A673 (cell line): ENCODE measurements at regions of chr7 and their contacts with region 1.

Region 1: GRCh38 chr7:45917658-45918057 is 3.4 kb downstream of the IGFBP3 start:
- DNase-seq: peak; percentile 78
- H3K4me3 ChIP-seq: no peak overlapping the region
- H3K27ac ChIP-seq: no peak overlapping the region
- H3K4me1 ChIP-seq: peaks cover 3% of the 10 kb centered on the region
- H3K27me3 ChIP-seq: peaks cover 71% of the 10 kb centered on the region
- CTCF ChIP-seq: peak; percentile 93

Region 2: GRCh38 chr7:45057871-45058270 is 859.8 kb before region 1 on chr7:
- CTCF ChIA-PET with region 1: no interaction called
- POLR2A ChIA-PET with region 1: no interaction called
- intact Hi-C with region 1: no loop called
- DNase-seq: no peak
- H3K4me3 ChIP-seq: no peak overlapping the region
- H3K27ac ChIP-seq: no peak overlapping the region
- H3K4me1 ChIP-seq: no peaks in the 10 kb centered on the region
- H3K27me3 ChIP-seq: no peaks in the 10 kb centered on the region
- CTCF ChIP-seq: no peak

Region 3: DNA sequence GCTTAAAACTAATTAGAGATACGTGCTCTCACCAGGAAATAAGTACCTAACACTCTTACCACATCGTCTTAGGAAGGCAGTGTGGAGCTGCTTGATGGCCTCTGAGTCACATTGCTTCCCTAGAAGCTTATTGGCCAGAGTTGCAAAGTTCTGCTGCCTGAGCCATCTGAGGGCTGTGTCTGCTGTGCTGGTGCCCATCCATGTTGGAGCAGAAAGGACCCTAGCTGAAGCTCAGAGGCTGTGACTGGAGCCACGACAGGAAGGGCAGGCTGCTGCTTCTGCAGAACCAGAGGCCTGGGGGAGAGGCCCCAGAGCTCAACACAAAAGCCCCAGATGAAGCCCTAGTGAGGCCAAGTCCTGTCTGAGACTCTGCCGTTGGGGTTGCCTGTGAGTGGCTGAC is 68.2 kb after region 1 on chr7:
- CTCF ChIA-PET with region 1: no interaction called
- POLR2A ChIA-PET with region 1: no interaction called
- intact Hi-C with region 1: no loop called
- DNase-seq: no peak
- H3K4me3 ChIP-seq: no peak overlapping the region
- H3K27ac ChIP-seq: no peak overlapping the region
- H3K4me1 ChIP-seq: no peaks in the 10 kb centered on the region
- H3K27me3 ChIP-seq: no peaks in the 10 kb centered on the region
- CTCF ChIP-seq: no peak

Region 4: GRCh38 chr7:46035166-46035565 is 117.5 kb after region 1 on chr7:
- CTCF ChIA-PET with region 1: no interaction called
- POLR2A ChIA-PET with region 1: no interaction called
- intact Hi-C with region 1: no loop called
- DNase-seq: no peak
- H3K4me3 ChIP-seq: no peak overlapping the region
- H3K27ac ChIP-seq: no peak overlapping the region
- H3K4me1 ChIP-seq: no peaks in the 10 kb centered on the region
- H3K27me3 ChIP-seq: peaks cover 18% of the 10 kb centered on the region
- CTCF ChIP-seq: no peak

Region 5: GRCh38 chr7:47179812-47180515 is 1262.3 kb after region 1 on chr7:
- CTCF ChIA-PET with region 1: no interaction called
- POLR2A ChIA-PET with region 1: no interaction called
- intact Hi-C with region 1: loop called (anchors 1 kb)
- DNase-seq: peak; percentile 55
- H3K4me3 ChIP-seq: no peak overlapping the region
- H3K27ac ChIP-seq: no peak overlapping the region
- H3K4me1 ChIP-seq: no peaks in the 10 kb centered on the region
- H3K27me3 ChIP-seq: peaks cover 10% of the 10 kb centered on the region
- CTCF ChIP-seq: peak; percentile 73

Region 6: DNA sequence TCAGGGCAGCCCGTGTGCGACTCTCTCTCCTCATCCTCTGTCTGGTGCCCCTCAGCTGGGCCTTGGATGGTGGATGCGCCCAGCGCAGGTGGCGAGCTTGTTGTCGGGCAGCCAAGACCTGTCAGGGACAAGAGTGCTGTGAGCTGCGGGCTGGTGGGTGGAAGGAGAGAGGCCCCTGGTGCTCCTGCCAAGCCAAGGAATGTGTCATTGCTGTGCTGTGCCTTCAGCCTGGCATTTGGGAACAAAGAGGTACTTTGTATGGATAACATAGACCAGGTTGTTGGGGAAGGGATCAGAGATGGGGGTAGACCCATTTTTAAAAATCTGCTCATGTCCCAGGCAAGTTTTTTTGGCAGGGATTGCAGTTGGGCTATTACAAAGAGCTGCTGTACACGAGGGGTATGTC is 1909.7 kb after region 1 on chr7:
- CTCF ChIA-PET with region 1: no interaction called
- POLR2A ChIA-PET with region 1: no interaction called
- intact Hi-C with region 1: loop called (anchors 10 kb)
- DNase-seq: no peak
- H3K4me3 ChIP-seq: no peak overlapping the region
- H3K27ac ChIP-seq: no peak overlapping the region
- H3K4me1 ChIP-seq: no peaks in the 10 kb centered on the region
- H3K27me3 ChIP-seq: peaks cover 17% of the 10 kb centered on the region
- CTCF ChIP-seq: no peak